HEK293T (cell line): ENCODE measurements at regions of chr12 and their contacts with region 1.

Region 1: DNA sequence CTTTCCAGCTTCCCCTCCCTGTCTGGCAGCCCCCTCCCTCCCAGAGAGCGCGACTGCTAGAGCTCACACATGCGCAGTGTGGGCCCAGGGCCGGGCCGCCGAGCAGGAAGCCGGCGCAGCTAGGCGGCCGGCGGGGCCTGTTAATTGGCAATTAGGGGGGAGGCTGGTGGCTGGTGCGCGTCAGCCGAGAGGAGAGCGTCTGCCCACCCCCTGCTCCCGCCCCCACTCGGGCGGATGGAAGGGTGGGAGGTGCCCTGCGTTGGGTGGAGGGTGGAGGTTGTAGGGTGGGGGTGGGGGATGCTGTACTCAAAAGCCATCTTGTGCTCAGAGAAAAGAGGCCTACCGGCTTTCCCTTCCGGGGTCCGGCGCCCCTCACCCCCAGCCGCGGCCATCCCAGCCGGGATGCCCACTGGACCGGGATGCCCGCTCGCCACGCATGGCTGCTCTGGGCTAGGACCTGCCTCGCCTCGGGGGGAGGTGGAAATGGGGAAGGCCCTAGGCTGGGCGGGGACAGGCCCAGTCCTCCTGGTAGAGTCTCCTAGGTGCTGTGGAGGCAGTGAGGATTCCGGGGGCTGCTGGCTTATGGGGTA is 9.2 kb downstream of the HOXC8 start:
- DNase-seq: peak; percentile 90

Region 2: DNA sequence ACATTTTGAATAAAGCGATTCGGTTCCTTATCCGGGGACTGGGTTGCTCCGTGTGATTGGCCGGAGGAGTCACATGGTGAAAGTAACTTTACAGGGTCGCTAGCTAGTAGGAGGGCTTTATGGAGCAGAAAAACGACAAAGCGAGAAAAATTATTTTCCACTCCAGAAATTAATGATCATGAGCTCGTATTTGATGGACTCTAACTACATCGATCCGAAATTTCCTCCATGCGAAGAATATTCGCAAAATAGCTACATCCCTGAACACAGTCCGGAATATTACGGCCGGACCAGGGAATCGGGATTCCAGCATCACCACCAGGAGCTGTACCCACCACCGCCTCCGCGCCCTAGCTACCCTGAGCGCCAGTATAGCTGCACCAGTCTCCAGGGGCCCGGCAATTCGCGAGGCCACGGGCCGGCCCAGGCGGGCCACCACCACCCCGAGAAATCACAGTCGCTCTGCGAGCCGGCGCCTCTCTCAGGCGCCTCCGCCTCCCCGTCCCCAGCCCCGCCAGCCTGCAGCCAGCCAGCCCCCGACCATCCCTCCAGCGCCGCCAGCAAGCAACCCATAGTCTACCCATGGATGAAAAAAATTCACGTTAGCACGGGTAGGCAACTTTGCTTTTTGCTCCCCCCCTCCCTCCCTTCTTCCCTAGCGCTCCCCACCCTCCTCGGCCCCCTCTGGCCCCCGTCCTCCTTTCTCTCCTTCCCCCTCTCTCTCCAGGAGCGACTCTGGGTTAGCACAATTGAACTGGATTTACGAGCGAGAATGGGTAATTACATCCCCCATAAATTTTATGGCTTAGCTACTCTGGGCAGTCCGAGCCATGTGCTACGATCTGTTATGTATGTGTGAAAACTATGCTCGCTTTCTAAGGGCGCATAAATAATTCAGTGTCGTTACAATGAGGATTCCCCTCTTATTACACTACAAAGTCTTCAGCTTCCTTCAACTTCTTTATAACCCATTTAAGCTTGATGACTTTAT is 36.1 kb after region 1 on chr12 and contains the start of gene HOXC4:
- CTCF ChIA-PET with region 1: no interaction called
- POLR2A ChIA-PET with region 1: interaction called, 17 read pairs
- DNase-seq: peak; percentile 64

Region 3: GRCh38 chr12:54182086-54182485 is 164.1 kb after region 1 on chr12:
- CTCF ChIA-PET with region 1: no interaction called
- POLR2A ChIA-PET with region 1: no interaction called
- DNase-seq: no peak